Motor neuron (in vitro differentiated cells): ENCODE measurements at regions of chr4 and their contacts with region 1.

Region 1: GRCh38 chr4:53702334-53703266 is 111.3 kb upstream of the LNX1 start:
- ATAC-seq: peak; percentile 80 to 97 (median 88)
- H3K4me3 ChIP-seq: no peak overlapping the region
- H3K27ac ChIP-seq: peak overlapping the region in 1 of 2 donors; percentile 50
- H3K4me1 ChIP-seq: peaks cover 5 to 12% of the 10 kb centered on the region in 2 donors

Region 2: DNA sequence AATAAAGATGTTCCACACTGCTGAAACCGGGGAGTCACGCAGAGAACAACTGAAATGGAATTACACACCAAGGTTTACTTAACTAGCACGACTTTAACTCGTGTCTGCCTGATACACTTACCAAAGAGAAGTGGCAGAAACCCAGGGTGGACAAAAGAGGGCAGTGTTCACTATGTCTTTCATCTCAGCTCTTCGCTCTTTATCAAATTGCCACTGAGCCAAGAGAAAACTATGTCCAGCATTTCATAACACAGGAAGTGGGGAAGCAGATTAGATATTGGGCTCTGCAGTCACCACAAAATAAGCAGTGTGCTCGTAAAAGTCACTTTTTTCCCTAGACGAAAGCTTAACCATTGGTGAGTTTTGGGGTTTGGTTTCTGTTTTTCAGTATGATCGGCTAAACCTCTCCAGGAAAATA is 206.1 kb after region 1 on chr4:
- in situ Hi-C with region 1: loop called in 3 of 9 experiments (anchors 25 kb)
- ATAC-seq: peak; percentile 36 to 87 (median 73)
- H3K4me3 ChIP-seq: no peak overlapping the region
- H3K27ac ChIP-seq: no peak overlapping the region
- H3K4me1 ChIP-seq: peaks cover 0 to 8% of the 10 kb centered on the region in 2 donors